ENCODE measurements at regions of chr18 and their contacts with region 1.

Region 1: DNA sequence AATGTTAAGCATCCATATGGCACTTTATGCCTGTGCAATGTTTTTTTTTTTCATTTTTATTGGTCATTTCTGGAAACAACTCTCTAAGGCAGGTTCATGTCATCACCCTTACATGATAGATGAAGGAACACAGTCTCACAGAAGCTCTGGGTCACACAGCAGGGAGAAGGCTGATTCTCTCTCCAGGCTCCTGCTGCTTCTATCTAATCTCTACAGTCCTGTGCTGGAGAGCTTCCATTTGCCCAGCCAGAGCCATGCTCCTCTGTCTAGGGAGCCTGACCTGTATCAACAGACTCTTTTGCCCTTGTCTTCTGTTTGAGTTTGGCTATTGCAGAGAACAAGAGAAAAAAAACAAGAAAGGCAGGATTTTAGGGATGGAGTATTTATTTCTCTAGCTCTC is 584.8 kb downstream of the MBD2 start:
- DNase-seq: no peak
- H3K4me3 ChIP-seq: no peak overlapping the region
- H3K27ac ChIP-seq: no peak overlapping the region
- H3K4me1 ChIP-seq: no peaks in the 10 kb centered on the region
- H3K27me3 ChIP-seq: no peaks in the 10 kb centered on the region
- CTCF ChIP-seq: no peak
- EP300 ChIP-seq: no peak
- POLR2A ChIP-seq: no peak

Region 2: GRCh38 chr18:55351980-55352714 is 1712.5 kb after region 1 on chr18:
- intact Hi-C with region 1: loop called in 1 of 4 experiments (anchors 10 kb)
- DNase-seq: no peak
- H3K4me3 ChIP-seq: no peak overlapping the region
- H3K27ac ChIP-seq: no peak overlapping the region
- H3K4me1 ChIP-seq: peaks cover 6% of the 10 kb centered on the region
- H3K27me3 ChIP-seq: no peaks in the 10 kb centered on the region
- CTCF ChIP-seq: no peak
- EP300 ChIP-seq: no peak
- POLR2A ChIP-seq: no peak

Measured in ovary (tissue), 10 donors.